ENCODE measurements at regions of chr3 and their contacts with region 1.

Region 1: GRCh38 chr3:116757315-116757714 is 47.7 kb downstream of the TUSC7 start:
- DNase-seq: no peak
- H3K4me3 Mint-ChIP-seq: no peak overlapping the region
- H3K27ac Mint-ChIP-seq: no peak overlapping the region
- H3K4me1 Mint-ChIP-seq: no peaks in the 10 kb centered on the region
- H3K27me3 Mint-ChIP-seq: peaks cover 5% of the 10 kb centered on the region

Region 2: GRCh38 chr3:115819785-115820384 is 937.4 kb before region 1 on chr3:
- CTCF ChIA-PET with region 1: no interaction called
- intact Hi-C with region 1: loop called (anchors 5 kb)
- DNase-seq: peak; percentile 79
- H3K4me3 Mint-ChIP-seq: no peak overlapping the region
- H3K27ac Mint-ChIP-seq: no peak overlapping the region
- H3K4me1 Mint-ChIP-seq: no peaks in the 10 kb centered on the region
- H3K27me3 Mint-ChIP-seq: no peaks in the 10 kb centered on the region

Region 3: GRCh38 chr3:116140100-116140689 is 617.1 kb before region 1 on chr3:
- CTCF ChIA-PET with region 1: no interaction called
- intact Hi-C with region 1: loop called (anchors 1 kb)
- DNase-seq: no peak
- H3K4me3 Mint-ChIP-seq: no peak overlapping the region
- H3K27ac Mint-ChIP-seq: no peak overlapping the region
- H3K4me1 Mint-ChIP-seq: no peaks in the 10 kb centered on the region
- H3K27me3 Mint-ChIP-seq: no peaks in the 10 kb centered on the region